ENCODE measurements at regions of chr14 and their contacts with region 1.

Region 1: GRCh38 chr14:54773171-54773975 is 129.3 kb downstream of the GCH1 start:
- DNase-seq: peak; percentile 82
- ATAC-seq: peak; percentile 91 to 92
- H3K4me3 ChIP-seq: no peak overlapping the region
- H3K27ac ChIP-seq: peak overlapping the region; percentile 82
- H3K4me1 ChIP-seq: peaks cover 28% of the 10 kb centered on the region
- H3K27me3 ChIP-seq: no peaks in the 10 kb centered on the region
- CTCF ChIP-seq: peak; percentile 57

Region 2: DNA sequence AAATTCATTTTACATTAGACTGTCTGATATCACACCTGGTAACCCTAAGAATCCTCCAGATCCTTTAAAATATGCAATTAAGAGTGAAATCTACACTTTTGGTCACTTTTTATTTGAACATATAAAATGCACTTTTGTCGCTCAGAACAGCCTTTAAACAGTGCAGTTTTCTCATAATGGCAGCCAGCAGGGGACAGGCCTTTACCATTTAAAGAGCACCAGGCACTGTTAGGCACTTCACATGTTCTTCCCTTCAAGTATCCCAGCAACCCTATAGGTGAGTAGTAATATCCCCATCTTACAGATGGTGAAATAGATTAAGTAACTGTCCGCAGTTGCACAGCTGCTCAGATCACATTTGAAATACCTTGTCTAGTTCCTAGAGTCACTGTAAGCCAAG is 217.7 kb before region 1 on chr14:
- intact Hi-C with region 1: loop called (anchors 10 kb)
- DNase-seq: no peak
- ATAC-seq: no peak
- H3K4me3 ChIP-seq: no peak overlapping the region
- H3K27ac ChIP-seq: no peak overlapping the region
- H3K4me1 ChIP-seq: no peaks in the 10 kb centered on the region
- H3K27me3 ChIP-seq: no peaks in the 10 kb centered on the region
- CTCF ChIP-seq: no peak

Region 3: DNA sequence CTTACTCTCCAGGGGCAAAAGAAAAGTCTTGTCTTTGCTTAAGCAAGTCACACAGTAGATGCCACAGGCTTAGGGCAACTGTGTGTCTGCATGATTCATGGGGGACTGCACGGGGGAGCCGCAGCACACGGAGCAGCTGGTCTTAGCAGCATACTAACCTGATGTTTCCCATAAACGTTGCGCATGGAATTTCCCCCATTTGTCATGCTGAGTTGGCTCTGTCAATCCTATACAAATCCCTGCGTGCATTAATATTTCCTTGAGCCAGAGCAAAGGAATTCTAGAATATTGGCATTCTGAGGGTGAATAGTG is 135.3 kb before region 1 on chr14:
- intact Hi-C with region 1: no loop called
- DNase-seq: no peak
- ATAC-seq: no peak
- H3K4me3 ChIP-seq: no peak overlapping the region
- H3K27ac ChIP-seq: no peak overlapping the region
- H3K4me1 ChIP-seq: peaks cover 13% of the 10 kb centered on the region
- H3K27me3 ChIP-seq: no peaks in the 10 kb centered on the region
- CTCF ChIP-seq: no peak

Measured in lower lobe of right lung (tissue), 2 donors.